Activated T-helper 2 cell treated with anti-CD3 and anti-CD28 coated beads, Interferon-gamma antibody, Interleukin-2, Interleukin-4, amounts not matched to agents 10 μg/mL and 5 μg/mL and 100 μg/mL, durations not matched to agents 14 hours and 24 hours and 36 hours (primary cell): ENCODE measurements at regions of chr22 and their contacts with region 1.

Region 1: DNA sequence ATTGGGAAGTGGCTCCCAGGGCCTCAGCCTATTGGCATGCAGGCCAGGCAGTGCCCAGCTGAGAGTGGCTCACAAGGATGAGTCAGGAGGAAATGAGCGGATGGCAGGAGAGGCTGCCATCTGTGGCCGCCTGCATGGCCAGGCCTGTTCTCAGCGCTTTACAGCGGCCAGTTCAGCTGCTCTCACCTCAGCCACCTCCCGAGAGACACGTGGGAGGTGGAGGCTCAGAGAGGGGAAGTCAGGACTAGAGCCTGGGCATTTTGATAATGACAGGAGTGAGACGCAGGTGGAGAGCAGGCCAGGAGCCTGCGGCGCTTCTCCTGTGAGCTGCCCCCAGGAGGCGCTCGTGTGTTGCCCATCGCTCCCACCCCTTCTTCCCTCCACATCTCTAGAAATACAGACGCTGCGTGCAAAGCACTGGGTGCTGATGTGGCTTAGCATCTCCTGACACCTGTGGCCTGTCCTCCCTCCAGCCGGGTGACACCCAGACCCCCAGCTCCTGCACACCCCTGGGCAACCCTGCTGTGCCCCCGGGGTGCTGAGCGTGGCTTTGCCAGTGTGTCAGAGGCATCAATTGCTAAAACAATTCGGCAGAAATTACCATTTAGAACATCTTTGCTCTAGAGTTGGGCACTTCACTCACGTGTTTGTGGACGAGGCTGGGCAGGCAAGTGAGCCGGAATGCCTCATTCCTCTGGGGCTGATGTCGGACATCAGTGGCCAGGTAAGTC is 21.4 kb upstream of the PANX2 start:
- DNase-seq: peak; percentile 67
- H3K4me3 Mint-ChIP-seq: no peak overlapping the region
- H3K27ac Mint-ChIP-seq: no peak overlapping the region
- H3K4me1 Mint-ChIP-seq: peaks cover 2% of the 10 kb centered on the region
- H3K27me3 Mint-ChIP-seq: no peaks in the 10 kb centered on the region

Region 2: DNA sequence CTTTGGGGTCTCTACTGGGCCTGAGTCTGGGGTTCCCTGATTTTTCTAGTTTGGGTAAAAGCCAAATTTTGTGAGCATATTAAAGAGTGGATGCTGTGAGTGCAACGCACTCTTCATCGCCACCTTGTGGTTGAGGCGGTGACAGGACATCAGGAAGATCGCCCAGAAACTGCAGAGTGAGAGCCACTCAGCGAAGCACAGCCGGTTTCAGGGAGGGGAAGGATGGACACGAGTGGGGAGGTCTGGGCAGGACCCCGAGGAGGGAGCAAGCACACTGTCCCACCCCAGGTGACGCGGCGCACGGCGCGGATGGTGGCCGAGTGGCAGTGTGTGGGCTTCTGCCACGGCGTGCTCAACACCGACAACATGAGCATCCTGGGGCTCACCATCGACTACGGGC is 60.7 kb after region 1 on chr22:
- intact Hi-C with region 1: loop called (anchors 1 kb)
- DNase-seq: peak; percentile 55
- H3K4me3 Mint-ChIP-seq: no peak overlapping the region
- H3K27ac Mint-ChIP-seq: peak overlapping the region; percentile 0
- H3K4me1 Mint-ChIP-seq: no peaks in the 10 kb centered on the region
- H3K27me3 Mint-ChIP-seq: no peaks in the 10 kb centered on the region

Region 3: DNA sequence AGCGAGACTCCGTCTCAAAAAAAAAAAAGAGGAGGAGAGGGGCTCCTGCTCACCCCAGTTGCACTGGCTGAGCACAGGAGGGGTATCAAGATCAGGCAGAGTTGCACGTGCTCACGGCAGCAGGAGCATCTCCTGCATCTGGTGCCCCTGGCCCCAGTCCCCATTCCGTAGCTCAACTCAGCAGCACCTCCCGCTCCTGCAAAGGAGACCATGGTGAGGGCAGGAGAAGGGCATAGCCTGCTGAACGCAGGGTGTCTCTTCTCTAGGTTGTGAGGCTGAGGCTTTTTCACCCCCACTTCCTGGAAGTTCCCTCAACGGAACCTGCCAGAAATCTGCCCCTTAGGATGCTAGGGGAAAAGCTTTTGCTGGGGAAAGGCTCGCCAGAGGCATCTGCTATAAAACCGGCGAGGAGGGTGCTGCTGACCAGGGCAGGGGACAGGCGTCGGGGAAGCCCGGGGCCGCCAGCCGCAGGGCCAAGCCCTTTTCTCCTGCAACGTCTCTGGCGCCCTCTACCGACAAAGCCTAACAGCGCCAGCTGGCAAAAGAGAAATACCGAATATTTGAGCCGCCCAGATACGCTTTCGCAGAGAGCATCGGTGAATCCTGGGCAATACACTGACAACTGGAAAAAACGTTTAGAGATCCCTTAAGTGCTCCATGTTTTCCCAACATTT is 193.0 kb after region 1 on chr22:
- intact Hi-C with region 1: no loop called
- DNase-seq: peak; percentile 83
- H3K4me3 Mint-ChIP-seq: peak overlapping the region; percentile 75
- H3K27ac Mint-ChIP-seq: peak overlapping the region; percentile 73
- H3K4me1 Mint-ChIP-seq: peaks cover 2% of the 10 kb centered on the region
- H3K27me3 Mint-ChIP-seq: no peaks in the 10 kb centered on the region